ENCODE measurements at regions of chr2 and their contacts with region 1.

Region 1: DNA sequence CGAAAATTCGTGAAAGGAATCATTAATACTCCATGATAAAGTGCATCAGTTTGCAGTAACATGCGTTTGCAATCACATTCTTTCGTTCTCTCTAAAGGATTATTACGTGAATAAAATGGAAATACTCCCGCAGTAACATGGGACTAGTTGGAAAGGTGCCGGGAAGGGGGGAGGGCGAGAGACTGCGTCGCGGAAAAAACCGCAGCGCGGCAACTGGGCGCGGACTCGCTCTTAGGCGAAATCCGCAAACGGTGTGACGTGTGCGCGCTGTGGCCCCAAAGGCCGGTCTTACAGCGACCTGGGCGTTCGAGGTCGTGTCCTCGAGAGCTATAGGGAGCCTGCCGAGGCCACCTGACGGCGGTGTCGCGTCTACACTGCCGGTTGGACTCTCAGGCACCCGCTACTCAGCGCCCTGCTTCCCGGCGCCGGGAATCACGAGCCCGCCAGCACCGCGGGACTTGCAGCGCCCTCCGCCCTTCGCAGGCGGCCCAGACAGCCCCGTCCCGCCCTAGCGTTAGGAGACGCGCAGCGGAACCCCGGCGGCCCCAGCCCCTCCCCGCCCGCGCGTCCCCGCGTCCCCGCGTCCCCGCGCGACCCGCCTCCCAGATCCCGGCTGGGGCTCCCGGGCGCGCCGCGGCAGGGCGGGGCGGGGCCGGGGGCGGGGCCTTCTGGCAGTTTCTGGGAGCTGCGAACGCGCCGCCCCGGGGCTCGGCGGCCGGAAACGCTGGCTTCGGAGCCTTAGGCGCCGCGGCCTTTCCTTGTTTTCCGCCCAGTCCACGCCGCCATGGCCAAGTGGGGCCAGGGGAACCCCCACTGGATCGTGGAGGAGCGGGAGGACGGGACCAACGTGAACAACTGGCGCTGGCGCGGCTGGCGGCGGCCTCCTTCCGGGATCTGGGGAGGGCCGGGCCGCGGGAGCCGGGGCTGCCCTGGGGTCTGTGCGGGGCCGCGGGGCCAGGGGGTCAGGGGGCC is 15.1 kb downstream of the C2orf74 start:
- DNase-seq: peak; percentile 76 to 93
- H3K4me3 ChIP-seq: peak overlapping the region; percentile 74 to 95 (median 82)
- H3K27ac ChIP-seq: peak overlapping the region; percentile 89
- H3K4me1 ChIP-seq: peaks cover 5 to 11% (median 7%) of the 10 kb centered on the region in 4 experiments; a peak in 6 of 7 replicates
- H3K27me3 ChIP-seq: peaks cover 0 to 5% (median 2%) of the 10 kb centered on the region in 4 experiments; a peak in 6 of 7 replicates
- CTCF ChIP-seq: no peak
- EP300 ChIP-seq: no peak
- POLR2A ChIP-seq: peak; percentile 75 to 92
- RAD21 ChIP-seq: peak in 1 of 2 experiments; percentile 4; a peak in 1 of 4 replicates

Region 2: GRCh38 chr2:61144697-61145268 is 32.3 kb before region 1 on chr2:
- CTCF ChIA-PET with region 1: no interaction called
- POLR2A ChIA-PET with region 1: interaction called, 13 read pairs
- DNase-seq: peak; percentile 83 to 95
- H3K4me3 ChIP-seq: peak overlapping the region; percentile 26 to 74 (median 42); a peak in 7 of 8 replicates
- H3K27ac ChIP-seq: no peak overlapping the region
- H3K4me1 ChIP-seq: no peaks in the 10 kb centered on the region
- H3K27me3 ChIP-seq: no peaks in the 10 kb centered on the region
- CTCF ChIP-seq: no peak
- EP300 ChIP-seq: no peak
- POLR2A ChIP-seq: peak in 1 of 2 experiments; percentile 64; a peak in 2 of 3 replicates
- RAD21 ChIP-seq: no peak

Region 3: GRCh38 chr2:61193670-61194571 is 16.9 kb after region 1 on chr2:
- CTCF ChIA-PET with region 1: no interaction called
- POLR2A ChIA-PET with region 1: interaction called, 13 read pairs
- DNase-seq: no peak
- H3K4me3 ChIP-seq: no peak overlapping the region
- H3K27ac ChIP-seq: no peak overlapping the region
- H3K4me1 ChIP-seq: no peaks in the 10 kb centered on the region
- H3K27me3 ChIP-seq: no peaks in the 10 kb centered on the region
- CTCF ChIP-seq: no peak
- EP300 ChIP-seq: no peak
- POLR2A ChIP-seq: no peak
- RAD21 ChIP-seq: no peak